Naive thymus-derived CD4-positive, alpha-beta T cell (primary cell): ENCODE measurements at regions of chr2 and their contacts with region 1.

Region 1: DNA sequence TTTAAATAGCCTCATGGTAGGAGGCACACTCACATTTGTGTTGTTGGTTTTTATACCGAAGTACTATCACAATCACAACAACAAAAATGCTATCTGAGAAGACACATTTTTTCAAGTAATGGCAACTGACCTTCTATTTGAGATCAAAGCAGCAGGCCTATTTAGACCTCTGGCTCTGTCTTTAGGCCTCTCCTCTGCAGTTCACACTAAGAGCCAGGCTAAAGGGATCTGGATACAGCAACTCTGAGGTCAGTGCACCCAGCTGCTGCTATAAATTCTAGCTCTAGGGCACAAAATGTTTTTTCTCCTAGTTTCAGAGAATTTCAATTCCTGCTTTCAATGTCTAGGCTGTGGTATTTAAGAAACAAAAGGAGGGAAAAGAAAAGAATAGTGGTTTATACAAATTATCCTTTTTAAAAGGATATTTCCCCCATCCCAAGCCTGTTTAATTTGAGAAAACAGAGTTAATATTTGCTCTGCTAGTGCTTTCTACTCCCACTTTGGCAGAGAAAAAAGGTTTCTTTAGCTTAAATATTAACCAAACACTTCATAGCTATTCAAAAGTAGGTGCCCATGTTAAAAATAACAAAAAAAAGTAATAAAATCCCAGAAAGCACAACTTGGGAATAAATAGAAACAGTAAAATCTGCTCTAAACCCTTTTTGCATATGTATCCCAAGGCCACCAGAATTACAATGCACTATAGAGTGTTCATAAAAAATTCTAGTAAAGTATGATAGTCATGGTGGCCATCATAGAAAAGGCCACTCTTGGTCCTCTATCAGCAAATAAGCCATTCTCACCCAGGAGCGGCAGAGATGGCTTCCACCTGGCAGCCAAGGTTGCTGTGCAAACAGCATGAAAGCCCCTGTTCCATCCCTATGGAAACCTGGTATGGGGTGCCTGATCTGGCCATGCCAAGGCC is 293.6 kb upstream of the SESTD1 start:
- DNase-seq: no peak
- ATAC-seq: no peak
- H3K4me3 ChIP-seq: no peak overlapping the region
- H3K4me3 Mint-ChIP-seq: no peak overlapping the region
- H3K27ac ChIP-seq: no peak overlapping the region
- H3K27ac Mint-ChIP-seq: no peak overlapping the region
- H3K4me1 ChIP-seq: no peaks in the 10 kb centered on the region
- H3K4me1 Mint-ChIP-seq: no peaks in the 10 kb centered on the region
- H3K27me3 ChIP-seq: no peaks in the 10 kb centered on the region
- H3K27me3 Mint-ChIP-seq: peaks cover 0 to 5% (median 0%) of the 10 kb centered on the region in 5 donors

Region 2: GRCh38 chr2:179545024-179545423 is 13.2 kb before region 1 on chr2:
- CTCF ChIA-PET with region 1: no interaction called
- POLR2A ChIA-PET with region 1: no interaction called
- intact Hi-C with region 1: loop called in 1 of 2 experiments (anchors 2 kb)
- DNase-seq: no peak
- ATAC-seq: no peak
- H3K4me3 ChIP-seq: no peak overlapping the region
- H3K4me3 Mint-ChIP-seq: no peak overlapping the region
- H3K27ac ChIP-seq: no peak overlapping the region
- H3K27ac Mint-ChIP-seq: no peak overlapping the region
- H3K4me1 ChIP-seq: no peaks in the 10 kb centered on the region
- H3K4me1 Mint-ChIP-seq: no peaks in the 10 kb centered on the region
- H3K27me3 ChIP-seq: no peaks in the 10 kb centered on the region
- H3K27me3 Mint-ChIP-seq: peaks cover 0 to 9% (median 0%) of the 10 kb centered on the region in 5 donors